Heart right ventricle (tissue), 16 donors: ENCODE measurements at regions of chr18 and their contacts with region 1.

Region 1: GRCh38 chr18:79507076-79507545 is 111.4 kb downstream of the NFATC1 start:
- DNase-seq: peak; percentile 83 to 84
- ATAC-seq: peak; percentile 85 to 96 (median 92)
- H3K4me3 ChIP-seq: peak overlapping the region in 9 of 10 donors; percentile 24 to 52 (median 42)
- H3K27ac ChIP-seq: peak overlapping the region; percentile 80 to 98 (median 94)
- H3K4me1 ChIP-seq: peaks cover 13 to 41% (median 29%) of the 10 kb centered on the region in 9 donors
- H3K27me3 ChIP-seq: no peaks in the 10 kb centered on the region
- CTCF ChIP-seq: no peak

Region 2: DNA sequence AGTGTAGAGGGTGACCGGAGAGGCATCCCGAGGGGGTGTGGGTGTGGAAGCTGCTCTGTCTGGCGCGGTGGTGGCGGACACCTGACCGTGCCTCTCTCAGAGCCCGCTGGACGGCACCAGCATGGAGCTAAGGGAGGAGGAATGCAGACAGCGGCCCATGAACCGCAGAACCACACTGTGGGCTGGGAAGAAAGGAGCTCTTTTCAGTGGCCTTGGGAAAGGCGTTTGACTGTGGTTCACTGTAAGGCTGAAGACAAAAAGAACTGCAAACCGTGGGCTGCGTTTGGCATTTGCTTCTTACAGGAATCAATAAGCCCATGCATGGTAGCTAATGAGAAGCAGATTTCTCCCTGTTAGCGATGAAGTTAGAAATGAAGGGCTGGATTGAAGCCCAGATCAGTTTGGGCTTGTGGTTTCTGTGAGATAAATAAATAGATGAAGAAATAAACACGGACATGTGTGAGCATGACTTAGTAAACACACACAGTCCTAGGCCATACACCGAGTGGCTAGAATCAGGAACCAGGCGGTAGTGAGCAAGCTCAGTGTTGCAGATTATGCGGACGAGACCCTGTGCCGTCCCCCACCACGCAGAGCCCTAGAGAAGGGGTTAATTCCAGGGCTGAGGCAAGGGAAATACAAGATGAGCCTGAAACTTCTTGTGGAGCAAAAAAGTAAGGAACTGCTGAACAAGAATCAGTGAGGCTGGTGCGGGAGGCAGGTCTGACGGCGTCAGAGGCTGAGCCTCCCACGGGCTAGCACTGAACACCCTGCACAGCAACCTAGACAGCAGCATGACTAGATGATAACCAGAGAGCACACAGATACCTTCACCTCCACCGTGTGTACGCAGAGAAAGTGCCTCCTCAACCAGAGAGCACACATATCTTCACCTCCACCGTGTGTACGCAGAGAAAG is 140.7 kb before region 1 on chr18:
- intact Hi-C with region 1: no loop called
- DNase-seq: no peak
- ATAC-seq: no peak
- H3K4me3 ChIP-seq: no peak overlapping the region
- H3K27ac ChIP-seq: no peak overlapping the region
- H3K4me1 ChIP-seq: peaks cover 0 to 8% (median 0%) of the 10 kb centered on the region in 9 donors
- H3K27me3 ChIP-seq: no peaks in the 10 kb centered on the region
- CTCF ChIP-seq: no peak

Region 3: GRCh38 chr18:79393635-79394533 is 113.2 kb before region 1 on chr18:
- intact Hi-C with region 1: loop called in 4 of 10 experiments (anchors 1 to 5 kb)
- DNase-seq: peak; percentile 96 to 97
- ATAC-seq: peak; percentile 71 to 86 (median 83)
- H3K4me3 ChIP-seq: peak overlapping the region; percentile 24 to 65 (median 51)
- H3K27ac ChIP-seq: peak overlapping the region; percentile 90 to 98 (median 94)
- H3K4me1 ChIP-seq: peaks cover 7 to 44% (median 28%) of the 10 kb centered on the region in 9 donors
- H3K27me3 ChIP-seq: peaks cover 0 to 76% (median 0%) of the 10 kb centered on the region in 7 donors
- CTCF ChIP-seq: no peak

Region 4: DNA sequence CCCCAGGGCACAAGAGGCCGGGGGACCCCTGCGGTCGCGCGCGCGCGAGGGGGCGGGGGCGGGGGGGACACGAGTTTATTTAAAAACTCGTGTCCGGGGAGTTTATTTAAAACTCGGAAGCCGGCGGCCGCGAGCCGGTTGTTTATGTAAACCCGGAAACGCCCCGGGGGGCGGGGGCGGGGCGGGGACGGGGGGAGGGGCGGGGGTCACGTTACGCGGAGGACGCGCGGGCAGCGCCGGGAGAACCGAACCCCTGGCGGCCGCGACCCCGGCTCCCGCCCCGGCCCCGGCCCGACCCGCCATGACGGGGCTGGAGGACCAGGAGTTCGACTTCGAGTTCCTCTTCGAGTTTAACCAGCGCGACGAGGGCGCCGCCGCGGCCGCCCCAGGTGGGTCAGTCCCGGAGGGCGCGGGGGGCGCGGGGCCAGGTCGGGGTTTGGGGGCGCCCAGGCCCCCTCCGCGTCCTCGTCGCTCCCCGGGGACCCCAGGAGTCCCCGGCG is 107.0 kb before region 1 on chr18:
- intact Hi-C with region 1: loop called in 2 of 10 experiments (anchors 2 to 5 kb)
- DNase-seq: peak; percentile 54 to 84
- ATAC-seq: peak in 3 of 8 donors; percentile 21 to 32 (median 25)
- H3K4me3 ChIP-seq: peak overlapping the region; percentile 51 to 92 (median 83)
- H3K27ac ChIP-seq: peak overlapping the region; percentile 79 to 95 (median 86)
- H3K4me1 ChIP-seq: peaks cover 30 to 75% (median 58%) of the 10 kb centered on the region in 9 donors
- H3K27me3 ChIP-seq: peaks cover 0 to 16% (median 0%) of the 10 kb centered on the region in 7 donors
- CTCF ChIP-seq: peak in 1 of 9 donors; percentile 10

Region 5: GRCh38 chr18:79465392-79465991 is 41.6 kb before region 1 on chr18:
- intact Hi-C with region 1: loop called in 1 of 10 experiments (anchors 5 kb)
- DNase-seq: peak; percentile 35 to 42
- ATAC-seq: peak; percentile 20 to 83 (median 60)
- H3K4me3 ChIP-seq: peak overlapping the region in 5 of 10 donors; percentile 8 to 41 (median 13)
- H3K27ac ChIP-seq: peak overlapping the region in 6 of 10 donors; percentile 22 to 71 (median 56)
- H3K4me1 ChIP-seq: peaks cover 5 to 32% (median 17%) of the 10 kb centered on the region in 9 donors
- H3K27me3 ChIP-seq: no peaks in the 10 kb centered on the region
- CTCF ChIP-seq: no peak